ENCODE measurements at regions of chr17 and their contacts with region 1.

Region 1: DNA sequence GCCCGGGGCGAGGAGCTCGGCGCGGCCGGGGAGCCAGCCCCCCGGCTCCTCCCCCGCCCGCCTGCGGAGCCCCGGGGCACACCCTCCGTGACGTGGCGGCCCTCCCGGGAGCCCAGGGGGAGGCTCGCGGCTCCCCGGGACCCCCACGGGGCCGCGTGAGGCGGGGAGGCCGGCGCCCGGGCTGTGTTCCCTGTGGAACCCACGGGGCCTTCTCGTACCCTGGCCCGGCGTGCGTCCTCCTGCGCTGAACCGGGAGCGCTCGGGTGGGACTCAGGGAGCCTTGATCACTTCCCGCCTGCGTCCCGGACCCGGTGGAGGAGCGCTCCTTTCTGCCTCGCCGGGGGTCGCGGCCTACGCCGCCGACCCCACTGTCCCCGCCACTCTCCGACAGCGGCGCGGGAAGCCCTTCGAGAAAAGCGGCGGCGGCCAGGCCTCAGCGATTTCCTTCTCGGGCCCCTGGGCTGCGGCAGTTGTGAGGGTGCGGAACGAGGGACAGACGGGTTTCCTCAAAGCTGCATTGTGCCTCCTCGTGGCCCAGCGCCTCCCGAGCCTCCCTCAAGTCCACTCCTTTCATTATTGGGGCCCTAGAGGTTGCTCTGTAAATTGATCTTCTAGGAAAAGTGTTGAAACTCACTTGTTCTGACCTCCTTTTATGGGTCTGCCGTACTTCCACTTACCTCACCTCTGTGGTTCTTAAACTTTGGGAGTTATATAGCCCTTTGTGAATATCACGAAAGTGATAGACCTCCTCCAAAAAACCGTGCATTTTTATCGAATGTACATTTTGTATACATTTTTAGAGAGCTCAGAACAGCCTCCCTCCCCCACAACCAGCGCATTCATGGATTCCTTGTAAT is 597 bp downstream of the LIG3 start:
- DNase-seq: peak in 1 of 2 donors; percentile 82
- H3K4me3 ChIP-seq: peak overlapping the region; percentile 96 to 97
- H3K27ac ChIP-seq: peak overlapping the region; percentile 99 to 100
- H3K4me1 ChIP-seq: peaks cover 0 to 22% of the 10 kb centered on the region in 2 donors
- H3K27me3 ChIP-seq: no peaks in the 10 kb centered on the region
- CTCF ChIP-seq: peak in 2 of 3 experiments; percentile 18 to 48

Region 2: DNA sequence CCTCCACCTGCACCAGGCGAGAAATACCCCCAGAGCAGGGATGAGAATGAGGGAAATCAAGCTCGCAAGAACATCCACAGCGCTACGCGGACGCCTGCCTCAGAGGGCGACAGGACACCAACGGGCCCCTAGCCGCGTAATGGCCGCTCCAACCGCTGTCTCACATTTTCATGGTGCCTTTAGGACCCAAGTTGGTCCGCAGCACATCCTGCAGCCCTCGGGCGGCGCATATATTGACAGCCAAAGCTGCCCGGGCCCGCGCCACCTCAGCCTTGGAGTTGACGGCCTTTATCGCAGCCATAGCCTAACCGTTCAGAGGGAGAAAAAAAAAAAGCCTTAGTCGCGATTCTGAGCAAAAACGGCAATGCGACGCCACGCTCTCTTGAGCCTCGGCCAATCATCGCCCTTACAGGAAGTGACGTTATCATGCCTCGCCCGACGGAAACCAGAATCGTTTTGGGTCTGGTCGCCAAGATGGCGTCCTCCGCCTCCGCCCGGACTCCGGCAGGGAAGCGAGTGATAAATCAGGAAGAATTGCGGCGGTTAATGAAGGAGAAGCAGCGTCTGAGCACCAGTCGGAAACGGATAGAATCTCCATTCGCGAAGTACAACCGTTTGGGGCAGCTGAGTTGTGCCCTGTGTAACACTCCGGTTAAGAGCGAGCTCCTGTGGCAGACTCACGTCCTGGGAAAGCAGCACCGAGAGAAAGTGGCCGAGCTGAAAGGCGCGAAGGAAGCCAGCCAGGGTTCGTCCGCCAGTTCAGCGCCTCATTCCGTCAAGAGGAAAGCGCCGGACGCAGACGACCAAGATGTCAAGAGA is 19.6 kb before region 1 on chr17 and contains the starts of genes CCT6B and ZNF830:
- intact Hi-C with region 1: loop called (anchors 1 kb)
- DNase-seq: peak; percentile 65 to 96
- H3K4me3 ChIP-seq: peak within 1 kb of the TSS; percentile 84
- H3K27ac ChIP-seq: peak within 1 kb of the TSS; percentile 87 to 93
- H3K4me1 ChIP-seq: peaks cover 5 to 10% of the 10 kb centered on the region in 2 donors
- H3K27me3 ChIP-seq: no peaks in the 10 kb centered on the region
- CTCF ChIP-seq: peak in 1 of 3 experiments; percentile 1
- total RNA-seq, gene CCT6B: not detected
- total RNA-seq, gene ZNF830: 1.9 TPM

Region 3: DNA sequence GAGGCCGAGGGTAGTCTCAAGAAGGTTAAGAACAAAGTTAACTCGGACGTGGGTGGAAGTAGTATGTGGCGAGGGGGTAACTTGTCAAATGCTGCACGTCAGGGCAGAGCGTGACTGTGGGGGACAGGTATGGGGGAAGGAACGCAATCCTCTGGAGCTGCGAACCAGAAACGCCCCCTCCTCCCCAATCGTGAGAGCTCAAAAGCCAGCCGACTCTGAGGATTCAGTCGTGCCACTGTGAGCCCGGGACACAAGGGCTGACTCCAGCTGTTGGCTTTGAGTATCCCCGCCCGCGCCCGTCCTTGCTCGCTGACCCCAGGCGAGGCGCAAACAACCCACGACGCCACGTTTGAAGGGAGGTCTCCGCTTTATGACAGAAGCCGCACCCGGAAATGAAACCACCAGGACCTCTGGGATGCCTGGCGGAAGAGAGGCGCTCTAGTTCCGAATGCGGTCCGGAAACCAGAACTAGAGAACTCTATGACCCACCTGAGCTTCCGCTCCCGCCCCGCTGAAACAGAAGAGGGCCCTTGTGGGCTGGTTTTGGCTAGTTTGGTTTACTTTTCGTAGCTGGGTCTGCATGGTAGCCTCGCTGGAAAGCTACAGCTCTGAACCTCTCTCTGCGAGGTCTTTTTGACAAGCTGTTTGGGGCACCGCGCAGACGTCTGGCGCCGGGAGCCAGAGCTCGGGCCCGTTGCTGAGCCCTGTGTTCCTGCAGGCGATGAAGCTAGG is 597.5 kb after region 1 on chr17 and contains the start of gene PEX12:
- intact Hi-C with region 1: loop called (anchors 10 kb)
- DNase-seq: peak; percentile 67 to 95
- H3K4me3 ChIP-seq: peak within 1 kb of the TSS; percentile 72 to 82
- H3K27ac ChIP-seq: peak within 1 kb of the TSS; percentile 85 to 94
- H3K4me1 ChIP-seq: peaks cover 0 to 12% of the 10 kb centered on the region in 2 donors
- H3K27me3 ChIP-seq: no peaks in the 10 kb centered on the region
- CTCF ChIP-seq: no peak
- total RNA-seq, gene PEX12: 5.6 TPM